GM10248 (cell line): ENCODE measurements at regions of chr2 and their contacts with region 1.

Region 1: DNA sequence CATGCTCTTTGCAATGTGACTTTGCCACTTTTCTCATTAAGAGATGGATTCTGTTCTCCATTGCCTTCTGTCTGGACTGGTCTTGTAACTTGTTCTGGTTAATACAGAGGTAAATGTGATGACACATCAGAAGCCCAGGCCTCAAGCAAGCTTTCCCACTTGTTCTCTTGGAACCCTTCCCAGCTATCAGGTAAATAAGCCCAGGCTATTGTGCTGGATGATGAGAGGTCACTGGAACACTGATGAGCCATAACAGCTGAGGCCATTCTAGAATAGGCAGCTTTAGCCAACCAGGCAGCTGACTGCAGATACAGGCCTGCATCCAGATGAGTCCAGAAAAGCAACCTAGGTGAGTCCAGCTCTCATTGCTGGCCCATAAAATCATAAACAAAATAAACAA is 1007.0 kb upstream of the ACVR2A start:
- DNase-seq: no peak
- CTCF ChIP-seq: no peak

Region 2: GRCh38 chr2:146826388-146826787 is 11.5 kb before region 1 on chr2:
- CTCF ChIA-PET with region 1: interaction called, 10 read pairs
- POLR2A ChIA-PET with region 1: no interaction called
- DNase-seq: no peak
- CTCF ChIP-seq: no peak

Region 3: DNA sequence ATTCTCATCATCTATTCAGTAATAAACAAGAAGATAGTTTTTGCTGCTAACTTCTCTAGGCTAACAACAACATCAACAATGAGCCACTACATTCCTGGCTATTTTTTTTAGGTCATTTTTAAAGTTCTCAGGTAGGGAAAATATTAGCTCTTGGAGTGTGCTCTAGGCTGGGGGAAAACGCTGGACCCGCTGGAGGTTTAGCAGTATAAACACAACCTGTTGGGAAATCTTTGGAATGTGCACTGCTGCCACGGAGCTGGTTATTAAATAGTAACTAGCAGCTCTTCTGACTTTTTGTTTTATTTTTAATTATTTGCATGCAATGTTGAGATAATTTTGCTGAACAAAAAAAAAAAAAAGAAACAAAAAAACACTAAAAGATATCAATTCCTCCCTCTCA is 114.8 kb after region 1 on chr2:
- CTCF ChIA-PET with region 1: no interaction called
- POLR2A ChIA-PET with region 1: no interaction called
- DNase-seq: no peak
- CTCF ChIP-seq: no peak